Heart right ventricle (tissue), 16 donors: ENCODE measurements at regions of chr4 and their contacts with region 1.

Region 1: GRCh38 chr4:158610790-158611189 is 60.9 kb downstream of the C4orf46 start:
- DNase-seq: no peak
- ATAC-seq: no peak
- H3K4me3 ChIP-seq: no peak overlapping the region
- H3K27ac ChIP-seq: peak overlapping the region in 1 of 10 donors; percentile 18
- H3K4me1 ChIP-seq: peaks cover 0 to 14% (median 0%) of the 10 kb centered on the region in 9 donors
- H3K27me3 ChIP-seq: no peaks in the 10 kb centered on the region
- CTCF ChIP-seq: no peak

Region 2: DNA sequence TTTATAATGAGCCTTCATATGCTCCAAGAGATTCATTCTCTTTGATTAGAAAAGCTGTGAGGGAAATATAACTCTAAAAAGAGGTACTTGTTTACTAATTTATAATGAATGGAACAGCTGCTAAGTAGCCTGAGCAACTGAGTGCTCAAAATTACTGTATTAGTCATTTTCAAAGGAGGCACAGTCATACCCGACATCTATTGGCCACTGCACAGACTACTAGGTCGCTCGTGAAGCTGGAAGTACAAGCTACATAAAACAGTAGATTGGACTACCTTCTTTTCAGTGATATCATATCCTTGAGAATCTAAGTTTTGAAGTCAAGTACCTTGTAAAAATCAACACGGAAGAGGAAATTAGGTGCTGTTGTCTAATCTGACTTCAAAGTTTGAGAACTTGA is 1586.8 kb before region 1 on chr4:
- intact Hi-C with region 1: loop called in 1 of 10 experiments (anchors 5 kb)
- DNase-seq: no peak
- ATAC-seq: no peak
- H3K4me3 ChIP-seq: no peak overlapping the region
- H3K27ac ChIP-seq: no peak overlapping the region
- H3K4me1 ChIP-seq: peaks cover 0 to 7% (median 0%) of the 10 kb centered on the region in 9 donors
- H3K27me3 ChIP-seq: peaks cover 0 to 3% (median 0%) of the 10 kb centered on the region in 7 donors
- CTCF ChIP-seq: no peak

Region 3: DNA sequence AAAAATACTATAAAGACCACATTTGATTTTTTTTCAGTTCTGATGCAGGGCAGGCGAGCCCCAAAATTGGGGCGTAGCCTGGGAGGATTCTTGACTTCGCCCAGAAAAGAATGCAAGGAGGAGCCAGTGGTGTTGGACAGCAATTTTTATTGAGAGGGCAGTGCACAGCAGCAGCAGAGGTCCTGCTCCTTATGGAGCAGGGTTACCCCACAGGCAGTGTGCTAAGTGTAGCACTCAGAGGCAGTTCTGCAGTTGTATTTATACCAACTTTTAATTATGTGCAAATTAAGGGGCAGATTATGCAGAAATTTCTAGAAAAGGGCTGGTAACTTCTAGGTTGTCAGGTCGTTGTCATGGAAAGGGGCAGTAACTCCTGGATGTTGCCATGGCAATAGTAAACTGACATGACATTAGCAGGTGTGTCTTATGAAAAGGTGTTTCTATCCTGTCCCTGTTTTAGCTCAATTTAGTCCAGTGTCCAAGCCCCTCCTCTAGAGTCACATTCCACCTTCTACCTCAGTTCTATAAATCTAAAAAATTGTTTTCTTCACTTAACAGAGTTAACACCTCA is 507.8 kb before region 1 on chr4:
- intact Hi-C with region 1: no loop called
- DNase-seq: no peak
- ATAC-seq: no peak
- H3K4me3 ChIP-seq: no peak overlapping the region
- H3K27ac ChIP-seq: no peak overlapping the region
- H3K4me1 ChIP-seq: no peaks in the 10 kb centered on the region
- H3K27me3 ChIP-seq: no peaks in the 10 kb centered on the region
- CTCF ChIP-seq: no peak

Region 4: DNA sequence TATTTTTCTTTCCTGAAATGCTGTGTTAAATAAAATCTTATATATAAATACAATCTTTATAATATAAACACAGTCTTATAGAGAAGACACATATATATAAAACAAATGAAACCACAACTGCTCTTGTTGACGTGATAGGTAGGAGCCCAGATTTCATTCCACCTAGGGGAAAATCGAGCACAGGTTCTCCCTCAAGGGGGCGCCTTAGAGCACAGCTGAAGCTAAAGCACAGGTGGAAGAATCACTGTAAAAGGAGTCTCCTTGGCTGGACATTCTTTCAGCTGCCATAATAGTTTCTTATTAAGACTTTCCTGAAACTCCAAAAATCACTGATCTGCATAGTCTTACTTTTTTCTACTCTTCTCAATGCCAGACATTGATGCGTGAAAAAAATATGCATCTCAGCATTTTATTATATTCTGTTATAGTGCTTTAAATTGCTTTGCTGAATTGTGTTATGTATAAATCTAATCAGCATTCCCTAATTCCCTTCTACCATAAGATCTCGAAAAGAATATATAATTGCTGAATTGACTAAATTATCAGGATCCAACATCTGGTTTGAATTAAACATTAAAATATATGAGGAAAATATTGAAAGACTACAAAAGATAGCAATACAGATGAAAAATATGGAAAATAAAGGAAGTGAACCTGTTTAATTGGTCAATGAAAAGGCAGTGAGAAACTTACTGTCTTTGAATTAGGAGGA is 114.6 kb before region 1 on chr4:
- intact Hi-C with region 1: loop called in 2 of 10 experiments (anchors 10 kb)
- DNase-seq: peak; percentile 18 to 21
- ATAC-seq: no peak
- H3K4me3 ChIP-seq: no peak overlapping the region
- H3K27ac ChIP-seq: no peak overlapping the region
- H3K4me1 ChIP-seq: no peaks in the 10 kb centered on the region
- H3K27me3 ChIP-seq: no peaks in the 10 kb centered on the region
- CTCF ChIP-seq: peak in 8 of 9 donors; percentile 12 to 69 (median 60)

Region 5: GRCh38 chr4:158521484-158522088 is 89.2 kb before region 1 on chr4 and contains the start of gene RXFP1:
- intact Hi-C with region 1: no loop called
- DNase-seq: no peak
- ATAC-seq: no peak
- H3K4me3 ChIP-seq: peak within 1 kb of the TSS in 2 of 10 donors; percentile 0 to 1
- H3K27ac ChIP-seq: no peak within 1 kb of the TSS
- H3K4me1 ChIP-seq: no peaks in the 10 kb centered on the region
- H3K27me3 ChIP-seq: no peaks in the 10 kb centered on the region
- CTCF ChIP-seq: no peak
- total RNA-seq, gene RXFP1: 0.16 TPM in 1 of 10 donors, not detected in the others

Region 6: DNA sequence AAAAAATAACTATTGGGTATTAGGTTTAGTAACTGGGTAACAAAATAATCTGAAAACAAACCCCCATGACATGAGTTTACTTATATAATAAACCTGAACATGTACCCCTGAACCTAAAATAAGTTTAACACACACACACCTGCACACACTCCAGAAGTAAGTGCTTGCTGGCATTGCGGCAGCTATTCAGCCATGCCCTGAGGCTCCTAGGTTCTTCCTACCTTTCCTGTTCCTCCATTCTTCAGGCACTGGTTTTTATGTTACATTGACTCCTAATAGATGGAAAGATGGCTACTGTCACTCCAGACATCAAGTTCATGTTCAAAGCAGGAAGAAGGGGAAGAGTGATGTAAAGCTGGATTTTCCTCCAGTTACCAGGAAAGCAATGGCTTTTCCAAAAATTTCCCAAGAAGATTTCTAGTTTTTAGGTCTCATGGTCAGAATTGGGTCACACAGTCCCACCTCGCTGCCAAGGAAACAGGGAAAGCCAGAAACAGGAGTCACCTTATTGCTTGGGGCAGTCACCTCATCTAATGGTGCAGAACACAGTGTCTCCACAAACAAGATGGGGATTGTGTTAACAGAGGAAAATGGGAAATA is 67.7 kb before region 1 on chr4:
- intact Hi-C with region 1: no loop called
- DNase-seq: no peak
- ATAC-seq: no peak
- H3K4me3 ChIP-seq: no peak overlapping the region
- H3K27ac ChIP-seq: peak overlapping the region in 1 of 10 donors; percentile 46
- H3K4me1 ChIP-seq: peaks cover 0 to 11% (median 0%) of the 10 kb centered on the region in 9 donors
- H3K27me3 ChIP-seq: no peaks in the 10 kb centered on the region
- CTCF ChIP-seq: no peak